ENCODE measurements at regions of chr1 and their contacts with region 1.

Region 1: DNA sequence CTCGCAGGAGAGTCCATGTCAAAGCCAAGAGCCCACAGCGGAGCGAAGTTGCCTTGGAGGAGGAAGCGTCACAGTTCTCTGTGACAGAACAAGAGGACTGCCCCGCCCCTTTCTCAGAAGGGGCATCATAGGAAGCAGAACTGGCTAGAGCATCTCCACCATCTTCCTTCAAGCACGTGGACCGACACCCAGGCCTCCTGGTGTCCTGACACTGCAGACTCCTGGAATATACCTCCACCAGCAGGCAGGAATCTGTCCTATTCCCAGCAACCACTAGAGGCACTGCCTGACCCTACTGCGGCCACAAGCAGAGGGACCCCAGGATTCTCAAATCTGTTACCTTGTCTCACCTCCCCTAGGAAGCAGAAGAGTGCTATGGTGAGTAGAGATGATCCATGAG is 37.8 kb downstream of the GPA33 start:
- DNase-seq: no peak
- ATAC-seq: peak; percentile 48
- H3K4me3 ChIP-seq: no peak overlapping the region
- H3K27ac ChIP-seq: no peak overlapping the region
- H3K4me1 ChIP-seq: no peaks in the 10 kb centered on the region
- H3K27me3 ChIP-seq: no peaks in the 10 kb centered on the region
- CTCF ChIP-seq: peak in 5 of 7 experiments; percentile 21 to 41 (median 36)
- POLR2A ChIP-seq: no peak

Region 2: GRCh38 chr1:166915941-166916340 is 136.4 kb before region 1 on chr1:
- intact Hi-C with region 1: loop called (anchors 5 kb)
- DNase-seq: no peak
- ATAC-seq: no peak
- H3K4me3 ChIP-seq: no peak overlapping the region
- H3K27ac ChIP-seq: no peak overlapping the region
- H3K4me1 ChIP-seq: peaks cover 7% of the 10 kb centered on the region
- H3K27me3 ChIP-seq: peaks cover 0 to 9% of the 10 kb centered on the region in 2 donors
- CTCF ChIP-seq: no peak
- POLR2A ChIP-seq: no peak